ENCODE measurements at regions of chr19 and their contacts with region 1.

Region 1: GRCh38 chr19:12881172-12881808 is at the start of gene DNASE2:
- DNase-seq: peak; percentile 88 to 97 (median 92)
- ATAC-seq: peak; percentile 71
- H3K4me3 ChIP-seq: peak within 1 kb of the TSS; percentile 67
- H3K27ac ChIP-seq: peak within 1 kb of the TSS; percentile 96
- H3K4me1 ChIP-seq: peaks cover 31 to 65% of the 10 kb centered on the region in 2 experiments; a peak in 4 of 5 replicates
- H3K27me3 ChIP-seq: no peaks in the 10 kb centered on the region
- CTCF ChIP-seq: no peak
- EP300 ChIP-seq: 0 out of 2 replicates have a peak, but pooled peaks have one; percentile 34
- POLR2A ChIP-seq: peak; percentile 79
- RAD21 ChIP-seq: peak in 1 of 2 experiments; percentile 7; a peak in 1 of 4 replicates
- polyA plus RNA-seq, gene DNASE2: 4.4 to 6.1 TPM

Region 2: GRCh38 chr19:12617646-12618045 is 263.6 kb before region 1 on chr19:
- CTCF ChIA-PET with region 1: no interaction called
- POLR2A ChIA-PET with region 1: no interaction called
- in situ Hi-C with region 1: no loop called
- intact Hi-C with region 1: no loop called
- DNase-seq: no peak
- ATAC-seq: no peak
- H3K4me3 ChIP-seq: no peak overlapping the region
- H3K27ac ChIP-seq: no peak overlapping the region
- H3K4me1 ChIP-seq: no peaks in the 10 kb centered on the region
- H3K27me3 ChIP-seq: no peaks in the 10 kb centered on the region
- CTCF ChIP-seq: no peak
- EP300 ChIP-seq: no peak
- POLR2A ChIP-seq: no peak
- RAD21 ChIP-seq: no peak

Region 3: GRCh38 chr19:12838182-12838885 is 43.0 kb before region 1 on chr19 and contains the start of gene MAST1:
- CTCF ChIA-PET with region 1: no interaction called
- POLR2A ChIA-PET with region 1: no interaction called
- in situ Hi-C with region 1: no loop called
- intact Hi-C with region 1: loop called (anchors 5 kb)
- DNase-seq: peak; percentile 79 to 88 (median 82)
- ATAC-seq: peak; percentile 64
- H3K4me3 ChIP-seq: peak within 1 kb of the TSS; percentile 74
- H3K27ac ChIP-seq: peak within 1 kb of the TSS; percentile 67
- H3K4me1 ChIP-seq: peaks cover 45 to 66% of the 10 kb centered on the region in 2 experiments
- H3K27me3 ChIP-seq: no peaks in the 10 kb centered on the region; a peak in 1 of 5 replicates
- CTCF ChIP-seq: peak; percentile 30 to 77 (median 66); a peak in 5 of 6 replicates
- EP300 ChIP-seq: no peak
- POLR2A ChIP-seq: no peak
- RAD21 ChIP-seq: 0 out of 4 replicates have a peak, but pooled peaks of 1 of the 2 experiments have one; percentile 34
- polyA plus RNA-seq, gene MAST1: 0.48 to 0.67 TPM

Region 4: DNA sequence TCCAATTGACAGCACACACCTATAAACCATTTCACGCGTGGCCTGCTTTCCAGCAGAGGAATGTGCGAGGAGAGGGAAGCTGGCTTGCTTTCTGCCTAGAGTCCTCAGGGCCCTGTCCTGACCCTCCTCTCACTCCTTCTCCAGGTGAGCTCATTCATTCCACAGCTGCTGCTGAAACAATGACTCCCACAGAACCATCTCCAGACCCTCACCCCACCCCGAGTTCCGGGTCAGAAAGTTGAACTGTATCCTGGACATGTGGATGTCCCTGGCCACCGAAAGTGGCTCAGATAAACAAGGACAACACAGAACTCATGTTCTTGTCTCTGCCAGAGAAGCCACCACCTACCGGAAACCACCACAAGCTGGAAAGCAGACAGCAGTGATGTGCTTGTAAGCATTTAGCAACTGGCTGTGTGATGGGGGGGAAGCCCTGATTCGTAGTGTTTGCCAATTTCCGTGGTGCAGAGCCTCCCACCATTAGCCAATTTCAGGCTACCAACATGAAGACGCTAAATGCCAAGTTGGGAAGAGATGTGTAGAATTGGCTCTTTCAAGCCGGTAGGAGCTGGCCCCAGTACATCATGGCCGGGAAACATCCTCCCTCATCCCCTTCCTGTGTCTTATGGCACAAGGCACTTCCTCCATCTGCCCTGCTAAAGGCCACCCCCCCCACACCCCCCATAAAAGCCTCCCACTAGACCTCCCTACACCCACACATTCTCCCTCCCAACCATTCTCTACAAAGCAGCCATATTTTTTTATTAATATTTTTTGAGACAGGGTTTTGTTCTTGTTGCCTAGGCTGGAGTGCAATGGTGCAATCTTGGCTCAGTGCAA is 32.8 kb after region 1 on chr19:
- CTCF ChIA-PET with region 1: no interaction called
- POLR2A ChIA-PET with region 1: interaction called, 6 read pairs
- in situ Hi-C with region 1: no loop called
- intact Hi-C with region 1: loop called (anchors 1 kb)
- DNase-seq: peak in 1 of 4 experiments; percentile 11
- ATAC-seq: peak; percentile 16; the same call in 2 of the 3 replicates
- H3K4me3 ChIP-seq: no peak overlapping the region
- H3K27ac ChIP-seq: peak overlapping the region; percentile 24; the same call in 1 of the 3 replicates
- H3K4me1 ChIP-seq: peaks cover 17 to 22% of the 10 kb centered on the region in 2 experiments
- H3K27me3 ChIP-seq: no peaks in the 10 kb centered on the region
- CTCF ChIP-seq: no peak
- EP300 ChIP-seq: no peak
- POLR2A ChIP-seq: no peak
- RAD21 ChIP-seq: no peak

Region 5: DNA sequence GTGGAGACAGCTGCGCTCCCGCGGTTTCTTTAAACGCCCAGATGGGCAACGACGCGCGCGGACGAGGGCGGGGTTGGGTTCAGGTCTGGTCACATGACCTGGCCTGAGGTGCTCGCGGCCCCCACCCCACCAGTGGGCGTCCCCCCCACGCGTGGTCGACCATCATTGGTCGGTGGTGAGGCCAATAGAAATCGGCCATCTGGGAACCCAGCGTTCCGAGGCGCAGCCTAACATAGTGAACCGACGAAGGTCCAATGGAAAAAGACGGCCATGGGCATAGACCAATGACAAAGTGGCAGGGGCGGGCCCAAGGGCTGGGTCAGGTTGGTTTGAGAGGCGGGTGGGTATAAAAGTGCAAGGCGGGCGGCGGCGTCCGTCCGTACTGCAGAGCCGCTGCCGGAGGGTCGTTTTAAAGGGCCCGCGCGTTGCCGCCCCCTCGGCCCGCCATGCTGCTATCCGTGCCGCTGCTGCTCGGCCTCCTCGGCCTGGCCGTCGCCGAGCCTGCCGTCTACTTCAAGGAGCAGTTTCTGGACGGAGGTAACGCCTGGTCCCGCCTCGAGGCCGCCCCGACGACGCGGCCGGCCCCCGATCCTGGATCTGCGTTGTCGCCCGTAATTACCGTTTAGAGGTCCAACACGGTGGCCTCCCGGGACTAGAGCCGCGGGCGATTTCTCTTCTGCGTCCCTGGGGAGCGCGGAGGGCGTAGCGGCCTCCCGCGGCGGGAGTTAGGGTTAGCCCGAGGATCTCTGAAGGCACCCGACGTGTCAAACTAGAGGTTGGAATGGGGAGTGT is 57.1 kb after region 1 on chr19 and contains the start of gene CALR:
- CTCF ChIA-PET with region 1: no interaction called
- POLR2A ChIA-PET with region 1: interaction called, 7 read pairs
- in situ Hi-C with region 1: no loop called
- intact Hi-C with region 1: loop called (anchors 5 kb)
- DNase-seq: peak; percentile 92 to 100 (median 96)
- ATAC-seq: peak; percentile 93
- H3K4me3 ChIP-seq: peak within 1 kb of the TSS; percentile 90
- H3K27ac ChIP-seq: peak within 1 kb of the TSS; percentile 94
- H3K4me1 ChIP-seq: peaks cover 36 to 46% of the 10 kb centered on the region in 2 experiments
- H3K27me3 ChIP-seq: no peaks in the 10 kb centered on the region
- CTCF ChIP-seq: peak in 2 of 3 experiments; percentile 42 to 65; a peak in 5 of 6 replicates
- EP300 ChIP-seq: no peak
- POLR2A ChIP-seq: peak; percentile 99
- RAD21 ChIP-seq: 0 out of 4 replicates have a peak, but pooled peaks of 1 of the 2 experiments have one; percentile 11
- polyA plus RNA-seq, gene CALR: 126 to 147 TPM

Region 6: DNA sequence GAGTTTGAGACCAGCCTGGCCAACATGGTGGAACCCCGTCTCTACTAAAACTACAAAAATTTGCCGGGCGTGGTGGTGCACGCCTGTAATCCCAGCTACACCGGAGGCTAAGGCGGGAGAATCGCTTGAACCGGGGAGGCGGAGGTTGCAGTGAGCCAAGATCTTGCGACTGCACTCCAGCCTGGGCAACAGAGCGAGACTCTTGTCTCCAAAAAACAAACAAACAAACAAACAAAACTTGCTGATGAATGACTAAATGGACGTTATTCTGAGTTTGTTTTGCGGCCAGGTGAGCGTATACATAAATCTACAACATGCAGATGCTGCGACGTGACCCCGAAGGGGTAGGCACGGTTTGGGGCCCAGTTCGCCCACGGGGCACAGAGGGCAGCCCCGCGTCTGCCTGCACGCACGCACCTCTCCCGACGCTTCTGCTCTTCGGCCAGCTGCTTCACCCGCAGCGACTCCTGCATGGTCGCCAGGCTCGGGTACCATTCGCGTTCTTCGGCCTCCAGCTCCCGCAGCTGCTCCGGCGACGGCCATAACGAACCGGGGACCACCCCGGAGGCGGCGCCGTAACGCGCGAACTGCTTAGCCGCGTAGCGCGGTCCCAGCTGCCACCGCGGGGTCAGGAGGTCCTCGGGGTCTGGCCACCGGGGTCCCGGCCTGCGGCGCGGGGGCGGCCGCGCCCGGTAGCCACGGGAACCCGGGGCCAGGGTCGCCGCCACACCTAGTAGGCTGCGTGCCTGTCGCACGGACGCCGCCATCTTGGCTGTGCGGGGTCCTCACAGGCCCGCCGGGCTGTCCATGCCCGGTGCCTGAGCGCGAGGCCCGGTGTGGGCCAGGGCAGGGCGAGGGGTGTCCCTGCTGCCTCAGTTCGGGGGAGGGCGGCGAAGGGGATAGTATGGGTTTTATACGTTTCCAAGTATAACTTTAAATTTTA is 75.4 kb after region 1 on chr19 and contains the start of gene GADD45GIP1:
- CTCF ChIA-PET with region 1: interaction called, 3 read pairs
- POLR2A ChIA-PET with region 1: interaction called, 14 read pairs
- in situ Hi-C with region 1: no loop called
- intact Hi-C with region 1: no loop called
- DNase-seq: peak; percentile 84 to 91 (median 87)
- ATAC-seq: peak; percentile 92
- H3K4me3 ChIP-seq: peak within 1 kb of the TSS; percentile 96
- H3K27ac ChIP-seq: peak within 1 kb of the TSS; percentile 92
- H3K4me1 ChIP-seq: peaks cover 0 to 39% of the 10 kb centered on the region in 2 experiments; a peak in 3 of 5 replicates
- H3K27me3 ChIP-seq: no peaks in the 10 kb centered on the region
- CTCF ChIP-seq: no peak
- EP300 ChIP-seq: no peak; the same call in 1 of the 2 replicates
- POLR2A ChIP-seq: peak; percentile 88
- RAD21 ChIP-seq: no peak
- polyA plus RNA-seq, gene GADD45GIP1: 5.1 to 6.8 TPM

Region 7: DNA sequence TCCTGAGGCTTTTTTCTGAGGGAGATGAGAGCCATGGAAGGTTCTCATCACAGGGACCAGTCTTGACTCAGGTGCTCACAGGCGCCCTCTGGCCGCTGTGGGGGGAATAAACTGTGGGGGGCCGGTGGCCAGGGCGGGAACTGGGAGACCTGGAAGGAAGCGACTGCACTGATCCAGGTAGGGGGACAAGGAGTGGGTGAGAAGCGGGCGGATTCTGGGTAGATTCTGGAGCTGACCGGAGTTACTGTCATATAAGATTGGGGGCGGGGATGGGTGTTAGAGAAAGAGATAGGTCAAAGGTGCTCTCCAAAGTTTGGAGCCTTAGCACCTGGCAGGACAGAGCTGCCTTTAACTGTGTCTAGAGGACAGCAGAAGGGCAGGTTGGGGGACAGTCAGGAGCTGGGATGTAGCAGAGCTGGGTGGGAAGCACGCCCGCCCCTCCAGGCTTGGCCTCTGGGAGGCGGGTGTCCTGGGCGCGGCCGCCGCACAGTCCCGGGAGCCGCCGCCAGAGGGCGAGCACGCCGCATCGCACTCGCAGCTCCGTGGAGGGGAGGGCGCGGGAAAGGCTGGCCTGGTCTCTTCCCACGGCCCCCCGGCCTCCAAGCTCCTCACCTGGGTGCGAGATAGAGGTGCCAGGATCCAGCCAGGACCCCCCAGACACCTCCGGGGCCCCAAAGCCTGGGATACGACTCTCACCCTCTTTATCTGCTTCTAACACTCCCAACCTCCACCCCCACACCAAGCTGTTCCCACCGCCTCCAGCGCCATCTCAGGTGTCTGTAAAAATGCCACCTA is 83.9 kb after region 1 on chr19:
- CTCF ChIA-PET with region 1: interaction called, 7 read pairs
- POLR2A ChIA-PET with region 1: interaction called, 5 read pairs
- in situ Hi-C with region 1: no loop called
- intact Hi-C with region 1: loop called (anchors 5 kb)
- DNase-seq: peak; percentile 85 to 93 (median 86)
- ATAC-seq: peak; percentile 98
- H3K4me3 ChIP-seq: peak overlapping the region; percentile 64
- H3K27ac ChIP-seq: peak overlapping the region; percentile 92
- H3K4me1 ChIP-seq: peaks cover 9 to 24% of the 10 kb centered on the region in 2 experiments; a peak in 4 of 5 replicates
- H3K27me3 ChIP-seq: no peaks in the 10 kb centered on the region
- CTCF ChIP-seq: peak; percentile 88 to 99 (median 98)
- EP300 ChIP-seq: no peak
- POLR2A ChIP-seq: peak; percentile 48; the same call in 1 of the 2 replicates
- RAD21 ChIP-seq: peak; percentile 69 to 83; a peak in 3 of 4 replicates

Region 8: DNA sequence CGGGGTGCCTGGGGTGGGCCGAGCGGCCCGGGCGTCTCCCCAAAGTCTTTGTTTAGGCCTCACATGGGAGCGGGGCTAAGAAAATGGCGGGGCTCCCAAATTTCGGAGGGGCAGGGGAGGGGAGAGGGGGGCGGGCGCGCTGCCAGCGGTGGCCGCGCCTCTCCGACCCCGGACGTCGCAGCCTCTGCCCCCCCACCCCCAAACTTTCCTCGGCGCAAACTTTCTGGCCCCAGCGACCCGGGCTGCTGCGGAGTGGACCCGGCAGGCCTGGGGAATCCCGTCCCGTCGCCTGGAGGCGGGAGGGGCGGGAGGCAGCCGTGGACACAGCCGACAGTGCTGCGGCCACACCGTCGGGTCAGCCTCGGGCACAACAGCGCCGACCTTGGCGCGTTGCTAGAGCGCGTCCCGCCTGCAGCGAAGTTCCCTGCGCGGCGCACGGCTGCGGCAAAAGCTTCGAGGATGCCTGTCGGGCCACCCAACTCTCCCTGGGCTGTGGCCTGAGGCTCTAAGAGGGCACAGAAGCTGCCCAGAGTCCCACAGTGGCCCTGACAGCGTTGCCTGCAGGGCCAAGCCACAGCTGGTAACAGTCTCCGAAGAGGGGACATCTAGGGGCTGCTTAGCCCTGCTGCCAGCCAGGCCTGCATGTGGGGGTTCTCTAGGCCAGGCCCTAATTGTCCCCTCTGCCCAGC is 115.3 kb after region 1 on chr19:
- CTCF ChIA-PET with region 1: no interaction called
- POLR2A ChIA-PET with region 1: no interaction called
- in situ Hi-C with region 1: no loop called
- intact Hi-C with region 1: no loop called
- DNase-seq: peak; percentile 67 to 72 (median 70)
- ATAC-seq: peak; percentile 91
- H3K4me3 ChIP-seq: peak overlapping the region; percentile 64
- H3K27ac ChIP-seq: peak overlapping the region; percentile 76
- H3K4me1 ChIP-seq: peaks cover 5 to 41% of the 10 kb centered on the region in 2 experiments; a peak in 4 of 5 replicates
- H3K27me3 ChIP-seq: no peaks in the 10 kb centered on the region
- CTCF ChIP-seq: peak; percentile 40 to 55 (median 45); a peak in 4 of 6 replicates
- EP300 ChIP-seq: no peak
- POLR2A ChIP-seq: no peak
- RAD21 ChIP-seq: no peak

Region 9: GRCh38 chr19:13012690-13013608 is 131.7 kb after region 1 on chr19:
- CTCF ChIA-PET with region 1: no interaction called
- POLR2A ChIA-PET with region 1: no interaction called
- in situ Hi-C with region 1: no loop called
- intact Hi-C with region 1: no loop called
- DNase-seq: peak; percentile 65 to 80 (median 72)
- ATAC-seq: peak; percentile 61
- H3K4me3 ChIP-seq: no peak overlapping the region
- H3K27ac ChIP-seq: peak overlapping the region; percentile 72; the same call in 2 of the 3 replicates
- H3K4me1 ChIP-seq: peaks cover 34 to 80% of the 10 kb centered on the region in 2 experiments
- H3K27me3 ChIP-seq: no peaks in the 10 kb centered on the region
- CTCF ChIP-seq: no peak
- EP300 ChIP-seq: 0 out of 2 replicates have a peak, but pooled peaks have one; percentile 4
- POLR2A ChIP-seq: no peak
- RAD21 ChIP-seq: no peak